ENCODE measurements at regions of chr21 and their contacts with region 1.

Region 1: GRCh38 chr21:33441489-33442477 is 38.0 kb downstream of the TMEM50B start:
- DNase-seq: peak; percentile 47 to 78
- H3K4me3 ChIP-seq: no peak overlapping the region
- H3K27ac ChIP-seq: peak overlapping the region; percentile 50 to 63
- H3K4me1 ChIP-seq: peaks cover 0 to 20% (median 7%) of the 10 kb centered on the region in 4 donors
- H3K27me3 ChIP-seq: no peaks in the 10 kb centered on the region
- CTCF ChIP-seq: no peak

Region 2: DNA sequence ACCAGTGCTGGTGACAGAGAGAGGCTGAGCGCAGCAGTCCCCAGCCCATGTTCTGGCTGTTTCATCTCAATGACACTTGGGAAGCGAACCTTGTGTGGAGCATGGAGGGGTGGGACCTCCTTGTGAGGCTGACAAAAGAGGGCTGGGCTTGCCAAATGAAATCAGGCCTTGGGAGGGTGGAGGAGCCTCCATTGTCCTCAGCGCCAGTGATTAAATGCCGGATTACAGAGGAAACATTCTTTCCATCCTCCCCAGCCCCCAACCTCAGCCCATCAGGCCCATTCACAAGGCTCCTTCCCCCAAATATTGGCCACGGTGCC is 606.9 kb before region 1 on chr21:
- intact Hi-C with region 1: loop called (anchors 10 kb)
- DNase-seq: no peak
- H3K4me3 ChIP-seq: no peak overlapping the region
- H3K27ac ChIP-seq: no peak overlapping the region
- H3K4me1 ChIP-seq: no peaks in the 10 kb centered on the region
- H3K27me3 ChIP-seq: peaks cover 0 to 6% of the 10 kb centered on the region in 2 donors
- CTCF ChIP-seq: no peak

Region 3: GRCh38 chr21:33360881-33361602 is 80.7 kb before region 1 on chr21:
- intact Hi-C with region 1: loop called (anchors 5 kb)
- DNase-seq: peak; percentile 62 to 82
- H3K4me3 ChIP-seq: peak overlapping the region in 1 of 2 donors; percentile 23
- H3K27ac ChIP-seq: peak overlapping the region; percentile 9 to 32
- H3K4me1 ChIP-seq: peaks cover 0 to 22% (median 15%) of the 10 kb centered on the region in 4 donors
- H3K27me3 ChIP-seq: no peaks in the 10 kb centered on the region
- CTCF ChIP-seq: peak; percentile 65 to 77